Transverse colon (tissue), 4 donors: ENCODE measurements at regions of chr18 and their contacts with region 1.

Region 1: DNA sequence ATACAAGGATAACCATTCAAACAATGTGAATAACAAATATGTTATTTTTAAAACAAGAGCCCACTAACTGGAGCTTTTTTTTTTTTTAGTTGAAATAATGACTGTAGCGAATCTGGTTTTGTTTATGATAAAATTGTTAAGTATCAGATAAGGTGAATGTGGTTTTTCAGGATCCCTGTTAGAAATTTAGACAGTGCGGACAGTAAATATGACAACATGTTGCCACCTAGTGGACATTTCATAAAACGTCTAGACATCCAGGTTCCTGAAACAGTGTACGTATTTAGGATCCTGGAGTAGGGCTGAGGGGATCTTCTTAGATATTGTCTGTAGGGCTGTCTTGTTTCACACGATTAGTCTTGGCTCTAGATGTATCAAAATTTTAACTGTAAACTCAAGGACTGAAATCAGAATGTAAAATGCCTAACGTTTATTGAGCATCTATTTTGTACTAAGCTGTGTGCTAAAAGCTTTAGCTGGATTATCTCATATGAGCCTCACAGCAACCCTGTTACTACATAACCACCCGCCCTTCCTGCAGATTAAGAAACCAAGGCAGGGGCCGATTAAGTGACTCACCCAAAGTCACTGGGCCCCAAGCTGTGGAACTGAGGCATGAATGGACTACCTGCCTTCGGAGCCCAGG is 23.9 kb upstream of the CCDC68 start:
- DNase-seq: no peak
- H3K4me3 ChIP-seq: no peak overlapping the region
- H3K27ac ChIP-seq: no peak overlapping the region
- H3K4me1 ChIP-seq: no peaks in the 10 kb centered on the region
- H3K27me3 ChIP-seq: no peaks in the 10 kb centered on the region
- CTCF ChIP-seq: peak; percentile 61 to 79 (median 72)
- EP300 ChIP-seq: no peak
- POLR2A ChIP-seq: no peak

Region 2: GRCh38 chr18:54444319-54444914 is 538.7 kb before region 1 on chr18:
- in situ Hi-C with region 1: loop called in 1 of 4 experiments (anchors 10 kb)
- intact Hi-C with region 1: no loop called
- DNase-seq: peak; percentile 78
- H3K4me3 ChIP-seq: no peak overlapping the region
- H3K27ac ChIP-seq: no peak overlapping the region
- H3K4me1 ChIP-seq: peaks cover 0 to 4% (median 0%) of the 10 kb centered on the region in 4 donors
- H3K27me3 ChIP-seq: no peaks in the 10 kb centered on the region
- CTCF ChIP-seq: peak; percentile 55 to 81 (median 69)
- EP300 ChIP-seq: no peak
- POLR2A ChIP-seq: no peak

Region 3: GRCh38 chr18:54679318-54680149 is 303.6 kb before region 1 on chr18:
- in situ Hi-C with region 1: loop called (anchors 5 to 10 kb)
- intact Hi-C with region 1: loop called (anchors 10 kb)
- DNase-seq: no peak
- H3K4me3 ChIP-seq: no peak overlapping the region
- H3K27ac ChIP-seq: no peak overlapping the region
- H3K4me1 ChIP-seq: no peaks in the 10 kb centered on the region
- H3K27me3 ChIP-seq: no peaks in the 10 kb centered on the region
- CTCF ChIP-seq: peak; percentile 29 to 56 (median 54)
- EP300 ChIP-seq: no peak
- POLR2A ChIP-seq: no peak

Region 4: GRCh38 chr18:55031979-55032378 is 48.8 kb after region 1 on chr18:
- in situ Hi-C with region 1: no loop called
- intact Hi-C with region 1: no loop called
- DNase-seq: no peak
- H3K4me3 ChIP-seq: no peak overlapping the region
- H3K27ac ChIP-seq: no peak overlapping the region
- H3K4me1 ChIP-seq: no peaks in the 10 kb centered on the region
- H3K27me3 ChIP-seq: no peaks in the 10 kb centered on the region
- CTCF ChIP-seq: no peak
- EP300 ChIP-seq: no peak
- POLR2A ChIP-seq: no peak